Endothelial cell of umbilical vein (primary cell): ENCODE measurements at regions of chr14 and their contacts with region 1.

Region 1: DNA sequence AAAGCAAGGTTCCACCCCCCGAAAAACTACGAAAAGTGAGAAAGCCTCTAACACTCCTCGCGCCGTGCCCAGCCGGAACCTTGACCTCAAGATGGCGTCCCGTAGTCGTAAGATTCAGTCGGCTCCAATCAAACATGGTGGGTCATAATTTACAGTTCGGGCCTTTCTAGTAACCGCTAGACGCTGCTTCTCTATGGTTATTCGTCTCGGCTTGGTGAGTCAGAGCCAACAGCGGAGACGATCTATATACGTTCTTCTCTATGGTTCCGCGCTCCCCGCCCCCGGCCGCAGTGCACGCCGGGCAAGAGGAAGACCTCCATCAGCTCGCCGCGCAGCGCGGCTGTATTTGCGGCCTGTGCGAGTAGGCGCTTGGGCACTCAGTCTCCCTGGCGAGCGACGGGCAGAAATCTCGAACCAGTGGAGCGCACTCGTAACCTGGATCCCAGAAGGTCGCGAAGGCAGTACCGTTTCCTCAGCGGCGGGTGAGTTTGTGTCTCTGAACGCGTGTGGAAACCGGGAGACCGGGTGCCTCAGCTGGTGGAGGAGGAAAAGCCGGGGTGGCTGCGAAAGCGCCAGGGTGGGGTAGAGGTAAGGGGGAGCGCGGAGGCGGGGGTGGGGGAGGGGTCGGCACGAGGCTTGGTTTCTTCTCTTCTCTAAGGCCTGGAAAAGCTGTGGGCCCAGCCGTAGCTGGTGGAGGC is at the start of gene RBM25:
- DNase-seq: peak; percentile 99
- H3K4me3 ChIP-seq: peak within 1 kb of the TSS; percentile 85 to 98 (median 94)
- H3K27ac ChIP-seq: peak within 1 kb of the TSS; percentile 84
- H3K4me1 ChIP-seq: peaks cover 9% of the 10 kb centered on the region
- H3K27me3 ChIP-seq: no peaks in the 10 kb centered on the region
- CTCF ChIP-seq: no peak
- POLR2A ChIP-seq: peak; percentile 97
- total RNA-seq, gene RBM25: 86.1 and 87.0 TPM in 2 replicates

Region 2: GRCh38 chr14:71591929-71592328 is 1466.4 kb before region 1 on chr14:
- CTCF ChIA-PET with region 1: no interaction called
- POLR2A ChIA-PET with region 1: no interaction called
- dilution Hi-C with region 1: no loop called
- intact Hi-C with region 1: no loop called
- DNase-seq: peak; percentile 44
- H3K4me3 ChIP-seq: no peak overlapping the region
- H3K27ac ChIP-seq: no peak overlapping the region
- H3K4me1 ChIP-seq: peaks cover 4% of the 10 kb centered on the region
- H3K27me3 ChIP-seq: no peaks in the 10 kb centered on the region
- CTCF ChIP-seq: no peak
- POLR2A ChIP-seq: no peak

Region 3: DNA sequence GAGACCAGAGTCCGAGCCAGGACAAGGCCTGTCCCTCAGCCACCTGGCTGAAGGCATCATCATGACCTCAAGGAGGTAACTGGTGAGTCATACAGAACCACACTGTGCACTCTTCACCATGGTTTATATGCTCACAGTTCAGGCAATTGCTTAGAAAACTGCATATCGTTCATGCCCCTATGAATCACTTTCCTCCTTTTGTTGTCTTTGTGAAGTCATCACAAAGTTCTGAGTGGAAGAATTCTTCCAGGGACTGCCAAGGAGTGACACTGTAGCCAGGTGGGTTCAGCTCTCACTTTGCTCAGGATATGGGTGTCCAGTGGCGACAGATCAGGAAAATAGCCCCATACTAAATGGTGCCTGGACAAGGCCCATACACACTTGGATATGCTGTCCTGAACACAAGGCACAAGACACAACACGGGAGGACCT is 257.0 kb before region 1 on chr14:
- CTCF ChIA-PET with region 1: no interaction called
- POLR2A ChIA-PET with region 1: no interaction called
- dilution Hi-C with region 1: no loop called
- intact Hi-C with region 1: no loop called
- DNase-seq: peak; percentile 93
- H3K4me3 ChIP-seq: no peak overlapping the region
- H3K27ac ChIP-seq: peak overlapping the region; percentile 95
- H3K4me1 ChIP-seq: peaks cover 22% of the 10 kb centered on the region
- H3K27me3 ChIP-seq: no peaks in the 10 kb centered on the region
- CTCF ChIP-seq: no peak
- POLR2A ChIP-seq: no peak

Region 4: GRCh38 chr14:73026845-73027542 is 31.4 kb before region 1 on chr14 and contains the start of gene ZFYVE1:
- CTCF ChIA-PET with region 1: interaction called, 4 read pairs
- POLR2A ChIA-PET with region 1: interaction called, 22 read pairs
- dilution Hi-C with region 1: no loop called
- intact Hi-C with region 1: loop called (anchors 1 kb)
- DNase-seq: peak; percentile 99
- H3K4me3 ChIP-seq: peak within 1 kb of the TSS; percentile 88 to 92 (median 89)
- H3K27ac ChIP-seq: peak within 1 kb of the TSS; percentile 62
- H3K4me1 ChIP-seq: peaks cover 6% of the 10 kb centered on the region
- H3K27me3 ChIP-seq: no peaks in the 10 kb centered on the region
- CTCF ChIP-seq: no peak
- POLR2A ChIP-seq: peak; percentile 85
- total RNA-seq, gene ZFYVE1: 29.2 and 30.7 TPM in 2 replicates